GM12878 (cell line): ENCODE measurements at regions of chr4 and their contacts with region 1.

Region 1: DNA sequence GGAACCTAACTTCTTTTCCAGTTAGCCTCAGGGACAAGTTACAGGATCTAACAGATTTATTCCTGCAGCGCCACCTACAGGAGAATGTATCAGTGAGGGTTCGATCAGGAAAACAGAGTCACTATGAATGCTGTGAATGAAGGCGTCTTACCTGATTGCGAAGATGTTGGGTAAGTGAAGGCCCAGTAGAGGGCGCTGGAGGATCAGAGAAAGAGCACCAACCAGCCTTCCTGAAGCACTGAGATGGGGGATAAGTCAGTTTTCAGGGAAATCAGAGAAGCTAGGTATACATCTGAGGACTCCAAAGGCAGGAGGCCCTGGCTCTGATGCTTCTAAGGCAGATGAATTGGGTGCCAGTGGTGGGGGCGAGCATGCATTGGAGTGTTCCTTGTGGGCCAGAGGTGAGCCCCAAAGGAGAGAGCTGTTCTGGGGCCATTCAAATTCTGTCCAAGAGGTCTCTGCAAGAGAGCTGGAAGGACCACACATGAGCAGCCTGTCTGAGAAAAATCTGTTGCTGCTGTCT is 169.9 kb upstream of the AADAT start:
- DNase-seq: peak; percentile 65
- ATAC-seq: peak; percentile 99
- H3K4me3 ChIP-seq: no peak overlapping the region
- H3K27ac ChIP-seq: no peak overlapping the region
- H3K4me1 ChIP-seq: no peaks in the 10 kb centered on the region
- H3K27me3 ChIP-seq: 0 out of 4 replicates have a peak, but pooled peaks cover 0 to 2% of the 10 kb centered on the region in 2 experiments
- CTCF ChIP-seq: peak; percentile 88 to 98 (median 97)
- EP300 ChIP-seq: no peak
- POLR2A ChIP-seq: no peak
- RAD21 ChIP-seq: peak; percentile 97

Region 2: GRCh38 chr4:170157670-170158069 is 102.0 kb before region 1 on chr4:
- CTCF ChIA-PET with region 1: interaction called, 14 read pairs
- POLR2A ChIA-PET with region 1: no interaction called
- RAD21 ChIA-PET with region 1: no interaction called
- SMC1A ChIA-PET with region 1: interaction called, 4 read pairs
- in situ Hi-C with region 1: no loop called
- intact Hi-C with region 1: no loop called
- DNase-seq: no peak
- ATAC-seq: no peak
- H3K4me3 ChIP-seq: no peak overlapping the region
- H3K27ac ChIP-seq: no peak overlapping the region
- H3K4me1 ChIP-seq: no peaks in the 10 kb centered on the region
- H3K27me3 ChIP-seq: no peaks in the 10 kb centered on the region
- CTCF ChIP-seq: no peak
- EP300 ChIP-seq: no peak
- POLR2A ChIP-seq: no peak
- RAD21 ChIP-seq: no peak

Region 3: DNA sequence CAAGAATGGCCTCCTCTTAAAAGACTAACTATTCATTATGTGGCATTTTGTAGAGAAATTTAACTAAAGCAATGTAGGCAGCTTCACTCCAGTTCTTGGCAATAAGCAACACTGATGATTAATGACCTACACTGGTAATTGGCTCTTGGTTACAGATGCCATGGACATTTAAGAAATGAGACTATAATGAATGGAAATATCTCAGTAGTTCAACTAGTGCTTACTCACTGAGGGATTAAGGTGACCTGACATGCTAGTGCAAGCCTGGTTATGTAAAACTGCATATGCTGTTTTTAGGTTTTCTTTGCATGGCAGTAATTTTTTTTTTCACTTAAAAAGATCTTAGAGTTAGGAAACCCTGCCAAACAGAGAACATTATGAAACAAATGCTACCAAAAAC is 17.2 kb before region 1 on chr4:
- CTCF ChIA-PET with region 1: interaction called, 46 read pairs
- POLR2A ChIA-PET with region 1: no interaction called
- RAD21 ChIA-PET with region 1: interaction called, 10 read pairs
- SMC1A ChIA-PET with region 1: interaction called, 5 read pairs
- in situ Hi-C with region 1: no loop called
- intact Hi-C with region 1: no loop called
- DNase-seq: no peak
- ATAC-seq: peak; percentile 29; the same call in 2 of the 3 replicates
- H3K4me3 ChIP-seq: no peak overlapping the region
- H3K27ac ChIP-seq: no peak overlapping the region
- H3K4me1 ChIP-seq: no peaks in the 10 kb centered on the region
- H3K27me3 ChIP-seq: no peaks in the 10 kb centered on the region
- CTCF ChIP-seq: no peak
- EP300 ChIP-seq: no peak
- POLR2A ChIP-seq: no peak
- RAD21 ChIP-seq: no peak

Region 4: GRCh38 chr4:170336238-170336775 is 76.6 kb after region 1 on chr4:
- CTCF ChIA-PET with region 1: interaction called, 11 read pairs
- POLR2A ChIA-PET with region 1: no interaction called
- RAD21 ChIA-PET with region 1: interaction called, 4 read pairs
- SMC1A ChIA-PET with region 1: interaction called, 17 read pairs
- in situ Hi-C with region 1: no loop called
- intact Hi-C with region 1: no loop called
- DNase-seq: peak; percentile 64
- ATAC-seq: peak; percentile 93
- H3K4me3 ChIP-seq: no peak overlapping the region
- H3K27ac ChIP-seq: peak overlapping the region; percentile 34; the same call in 1 of the 2 replicates
- H3K4me1 ChIP-seq: peaks cover 5% of the 10 kb centered on the region; the same call in 1 of the 2 replicates
- H3K27me3 ChIP-seq: no peaks in the 10 kb centered on the region
- CTCF ChIP-seq: peak in 1 of 3 experiments; percentile 10; a peak in 1 of 6 replicates
- EP300 ChIP-seq: peak; percentile 86 to 96
- POLR2A ChIP-seq: no peak
- RAD21 ChIP-seq: no peak

Region 5: GRCh38 chr4:170465434-170465833 is 205.7 kb after region 1 on chr4:
- CTCF ChIA-PET with region 1: interaction called, 11 read pairs
- POLR2A ChIA-PET with region 1: no interaction called
- RAD21 ChIA-PET with region 1: no interaction called
- SMC1A ChIA-PET with region 1: no interaction called
- in situ Hi-C with region 1: no loop called
- intact Hi-C with region 1: no loop called
- DNase-seq: no peak
- ATAC-seq: peak; percentile 19; the same call in 2 of the 3 replicates
- H3K4me3 ChIP-seq: no peak overlapping the region
- H3K27ac ChIP-seq: no peak overlapping the region
- H3K4me1 ChIP-seq: no peaks in the 10 kb centered on the region
- H3K27me3 ChIP-seq: no peaks in the 10 kb centered on the region
- CTCF ChIP-seq: no peak
- EP300 ChIP-seq: no peak
- POLR2A ChIP-seq: no peak
- RAD21 ChIP-seq: no peak

Region 6: DNA sequence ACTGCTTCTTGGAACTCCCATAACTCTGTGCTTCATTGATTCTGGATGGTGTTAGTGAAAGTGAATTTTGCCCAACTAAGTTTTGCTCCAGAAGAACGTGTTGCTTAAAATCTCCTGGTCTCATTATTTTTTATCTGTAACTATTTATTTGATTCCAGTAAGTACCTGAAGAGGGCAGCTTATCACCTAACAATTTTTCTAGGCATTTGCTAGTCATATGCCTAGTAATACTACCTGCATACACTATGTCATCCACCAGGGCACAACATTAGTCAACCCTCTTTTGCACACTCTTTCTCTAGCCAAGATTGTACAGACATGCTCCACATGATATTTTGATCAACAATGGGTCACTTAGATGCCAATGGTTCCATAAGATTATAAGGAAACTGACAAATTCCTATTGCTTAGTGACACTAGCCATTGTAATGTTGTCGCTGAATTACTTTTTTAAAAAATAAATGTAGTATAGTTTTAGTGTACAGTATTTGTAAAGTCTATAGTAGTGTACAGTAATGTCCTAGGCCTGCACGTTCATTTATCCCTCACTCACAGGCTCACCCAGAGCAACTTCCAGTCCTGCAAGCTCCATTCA is 330.0 kb after region 1 on chr4:
- CTCF ChIA-PET with region 1: interaction called, 32 read pairs
- POLR2A ChIA-PET with region 1: no interaction called
- RAD21 ChIA-PET with region 1: no interaction called
- SMC1A ChIA-PET with region 1: interaction called, 10 read pairs
- in situ Hi-C with region 1: no loop called
- intact Hi-C with region 1: loop called (anchors 1 kb)
- DNase-seq: peak; percentile 37
- ATAC-seq: peak; percentile 100
- H3K4me3 ChIP-seq: no peak overlapping the region
- H3K27ac ChIP-seq: no peak overlapping the region
- H3K4me1 ChIP-seq: no peaks in the 10 kb centered on the region
- H3K27me3 ChIP-seq: no peaks in the 10 kb centered on the region
- CTCF ChIP-seq: peak; percentile 57 to 64 (median 63)
- EP300 ChIP-seq: no peak
- POLR2A ChIP-seq: no peak
- RAD21 ChIP-seq: peak; percentile 70

Region 7: DNA sequence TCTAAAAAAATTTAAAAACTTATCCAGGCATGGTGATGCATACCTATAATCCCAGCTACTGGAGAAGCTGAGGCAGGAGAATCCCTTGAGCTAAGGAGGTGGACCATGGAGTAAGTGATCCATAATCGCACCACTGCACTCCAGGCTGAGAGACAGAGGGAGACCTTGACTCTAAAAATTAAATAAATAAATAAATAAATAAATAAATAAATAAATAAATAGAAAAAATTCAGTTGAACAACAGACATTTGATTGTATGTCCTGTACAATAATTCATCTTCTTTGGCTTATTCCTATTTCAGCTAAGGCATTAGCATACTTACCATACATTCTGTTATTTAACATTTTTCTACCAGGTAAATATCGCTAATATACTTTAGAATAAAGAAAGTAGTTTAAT is 827.4 kb after region 1 on chr4:
- CTCF ChIA-PET with region 1: no interaction called
- POLR2A ChIA-PET with region 1: no interaction called
- RAD21 ChIA-PET with region 1: no interaction called
- SMC1A ChIA-PET with region 1: no interaction called
- in situ Hi-C with region 1: no loop called
- intact Hi-C with region 1: no loop called
- DNase-seq: no peak
- ATAC-seq: no peak
- H3K4me3 ChIP-seq: no peak overlapping the region
- H3K27ac ChIP-seq: no peak overlapping the region
- H3K4me1 ChIP-seq: no peaks in the 10 kb centered on the region
- H3K27me3 ChIP-seq: no peaks in the 10 kb centered on the region
- CTCF ChIP-seq: no peak
- EP300 ChIP-seq: no peak
- POLR2A ChIP-seq: no peak
- RAD21 ChIP-seq: no peak